Esophagus muscularis mucosa (tissue), 4 donors: ENCODE measurements at regions of chr9 and their contacts with region 1.

Region 1: GRCh38 chr9:93302551-93303257 is 118.8 kb downstream of the WNK2 start:
- DNase-seq: no peak
- H3K4me3 ChIP-seq: no peak overlapping the region
- H3K27ac ChIP-seq: no peak overlapping the region
- H3K4me1 ChIP-seq: peaks cover 0 to 31% (median 23%) of the 10 kb centered on the region in 4 donors
- H3K27me3 ChIP-seq: no peaks in the 10 kb centered on the region
- CTCF ChIP-seq: peak; percentile 41 to 63 (median 49)
- EP300 ChIP-seq: no peak
- POLR2A ChIP-seq: no peak

Region 2: GRCh38 chr9:93003552-93004407 is 298.9 kb before region 1 on chr9:
- intact Hi-C with region 1: loop called (anchors 10 kb)
- DNase-seq: peak; percentile 90
- H3K4me3 ChIP-seq: peak overlapping the region in 3 of 4 donors; percentile 2 to 44 (median 28)
- H3K27ac ChIP-seq: no peak overlapping the region
- H3K4me1 ChIP-seq: peaks cover 0 to 8% (median 6%) of the 10 kb centered on the region in 4 donors
- H3K27me3 ChIP-seq: peaks cover 0 to 5% (median 0%) of the 10 kb centered on the region in 4 donors
- CTCF ChIP-seq: peak; percentile 52 to 72 (median 58)
- EP300 ChIP-seq: no peak
- POLR2A ChIP-seq: no peak

Region 3: GRCh38 chr9:93071464-93071863 is 231.2 kb before region 1 on chr9:
- intact Hi-C with region 1: no loop called
- DNase-seq: no peak
- H3K4me3 ChIP-seq: no peak overlapping the region
- H3K27ac ChIP-seq: no peak overlapping the region
- H3K4me1 ChIP-seq: peaks cover 3 to 26% (median 20%) of the 10 kb centered on the region in 4 donors
- H3K27me3 ChIP-seq: no peaks in the 10 kb centered on the region
- CTCF ChIP-seq: no peak
- EP300 ChIP-seq: no peak
- POLR2A ChIP-seq: no peak

Region 4: GRCh38 chr9:93159601-93160471 is 142.9 kb before region 1 on chr9:
- intact Hi-C with region 1: loop called (anchors 2 kb)
- DNase-seq: no peak
- H3K4me3 ChIP-seq: no peak overlapping the region
- H3K27ac ChIP-seq: no peak overlapping the region
- H3K4me1 ChIP-seq: peaks cover 18 to 33% (median 29%) of the 10 kb centered on the region in 4 donors
- H3K27me3 ChIP-seq: no peaks in the 10 kb centered on the region
- CTCF ChIP-seq: peak; percentile 98 to 99 (median 98)
- EP300 ChIP-seq: no peak
- POLR2A ChIP-seq: no peak

Region 5: GRCh38 chr9:93517331-93517730 is 214.6 kb after region 1 on chr9:
- intact Hi-C with region 1: no loop called
- DNase-seq: no peak
- H3K4me3 ChIP-seq: no peak overlapping the region
- H3K27ac ChIP-seq: no peak overlapping the region
- H3K4me1 ChIP-seq: peaks cover 0 to 21% (median 7%) of the 10 kb centered on the region in 4 donors
- H3K27me3 ChIP-seq: no peaks in the 10 kb centered on the region
- CTCF ChIP-seq: no peak
- EP300 ChIP-seq: no peak
- POLR2A ChIP-seq: no peak

Region 6: GRCh38 chr9:93642961-93643360 is 340.3 kb after region 1 on chr9:
- intact Hi-C with region 1: no loop called
- DNase-seq: no peak
- H3K4me3 ChIP-seq: no peak overlapping the region
- H3K27ac ChIP-seq: no peak overlapping the region
- H3K4me1 ChIP-seq: peaks cover 0 to 10% (median 3%) of the 10 kb centered on the region in 4 donors
- H3K27me3 ChIP-seq: no peaks in the 10 kb centered on the region
- CTCF ChIP-seq: no peak
- EP300 ChIP-seq: no peak
- POLR2A ChIP-seq: no peak

Region 7: DNA sequence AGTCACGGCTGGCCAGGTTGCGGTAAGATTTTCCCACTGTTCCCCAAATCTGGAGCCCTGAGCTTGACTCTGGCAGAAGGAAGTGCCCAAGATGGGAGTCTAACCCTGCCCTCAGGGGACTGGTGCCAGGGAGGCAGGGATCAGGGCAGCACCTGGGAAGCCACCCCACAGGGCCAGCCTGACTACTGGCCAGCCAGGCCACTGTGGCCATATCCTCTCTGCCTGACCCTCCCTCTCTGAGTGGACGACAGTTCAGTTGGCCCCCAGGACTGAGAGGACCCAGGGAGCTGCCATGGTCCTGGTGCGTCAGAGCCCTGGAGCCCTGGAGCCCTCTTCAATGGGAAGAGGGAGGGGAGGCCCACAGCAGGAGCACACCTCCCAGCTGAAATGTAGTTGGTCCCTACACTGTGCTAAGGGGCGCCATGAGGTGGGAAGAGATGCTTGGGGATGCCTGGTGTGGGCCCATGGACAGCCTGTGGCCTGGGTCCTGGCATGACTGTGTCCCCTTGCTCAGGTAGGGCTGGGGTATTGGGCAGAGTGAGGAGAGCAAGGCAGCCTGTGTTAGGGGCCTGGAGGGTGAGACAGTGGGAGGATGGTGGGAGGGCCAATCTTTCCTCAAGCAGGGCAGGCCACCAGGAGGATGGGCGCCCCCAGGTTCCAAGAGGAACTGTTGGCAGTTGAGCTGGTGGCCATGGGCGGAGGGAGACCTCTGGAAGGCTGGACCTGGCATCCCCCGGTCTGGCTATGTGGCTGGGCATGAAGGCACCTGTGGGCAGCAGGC is 354.8 kb after region 1 on chr9:
- intact Hi-C with region 1: no loop called
- DNase-seq: no peak
- H3K4me3 ChIP-seq: no peak overlapping the region
- H3K27ac ChIP-seq: no peak overlapping the region
- H3K4me1 ChIP-seq: no peaks in the 10 kb centered on the region
- H3K27me3 ChIP-seq: no peaks in the 10 kb centered on the region
- CTCF ChIP-seq: no peak
- EP300 ChIP-seq: no peak
- POLR2A ChIP-seq: no peak